GM10248 (cell line): ENCODE measurements at regions of chr7 and their contacts with region 1.

Region 1: GRCh38 chr7:93359520-93360198 is 127.5 kb downstream of the VPS50 start:
- DNase-seq: no peak
- CTCF ChIP-seq: no peak

Region 2: DNA sequence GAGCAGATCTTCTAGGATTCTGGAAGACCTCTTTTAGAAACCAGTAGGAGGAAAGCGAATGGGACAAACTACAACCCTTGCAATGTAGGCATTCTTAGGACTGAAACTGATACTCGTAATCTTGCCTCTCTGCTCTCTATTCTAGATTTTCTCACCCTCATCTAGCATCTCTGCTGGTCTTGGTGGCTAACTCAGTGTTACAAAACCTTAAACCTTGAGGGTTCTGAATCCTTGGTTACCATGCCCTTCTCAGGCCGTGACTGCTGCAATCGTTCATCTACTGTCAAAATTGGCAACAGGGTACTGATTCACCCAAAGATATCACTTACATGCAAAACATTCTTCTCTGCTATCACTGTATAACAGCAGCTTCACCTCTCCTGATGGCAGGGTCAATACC is 297.1 kb before region 1 on chr7:
- CTCF ChIA-PET with region 1: no interaction called
- POLR2A ChIA-PET with region 1: no interaction called
- DNase-seq: no peak
- CTCF ChIP-seq: no peak

Region 3: DNA sequence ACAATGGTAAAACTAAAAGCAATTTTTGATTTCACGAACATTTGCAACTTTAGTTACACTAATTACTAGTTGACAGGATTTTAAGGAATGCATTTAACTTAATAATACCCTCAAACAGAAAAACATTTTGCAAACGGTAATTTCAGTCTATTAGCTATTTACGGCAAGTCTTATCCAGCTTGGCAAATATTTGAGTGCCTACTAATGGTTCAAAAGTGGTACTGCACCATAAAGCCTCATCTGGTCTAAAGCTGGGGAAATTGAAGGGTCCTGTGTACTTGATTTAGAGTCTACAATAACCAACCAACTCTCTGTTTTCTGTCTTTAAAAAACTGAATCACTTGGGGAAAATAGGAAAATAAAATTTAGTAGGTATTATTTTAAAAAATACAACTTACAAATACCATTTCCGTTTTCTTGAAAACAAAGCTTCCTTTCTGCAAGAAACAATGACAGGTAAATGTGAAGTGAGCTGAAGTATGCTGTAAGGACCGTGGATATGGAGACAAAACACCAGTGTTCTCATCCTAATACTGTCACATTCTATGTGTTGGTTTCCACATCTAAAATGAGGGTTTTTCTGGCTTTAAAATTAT is 14.8 kb after region 1 on chr7:
- CTCF ChIA-PET with region 1: interaction called, 22 read pairs
- POLR2A ChIA-PET with region 1: no interaction called
- DNase-seq: peak; percentile 15
- CTCF ChIP-seq: peak; percentile 65